Dorsolateral prefrontal cortex (tissue), 120 donors: ENCODE measurements at regions of chr5 and their contacts with region 1.

Region 1: DNA sequence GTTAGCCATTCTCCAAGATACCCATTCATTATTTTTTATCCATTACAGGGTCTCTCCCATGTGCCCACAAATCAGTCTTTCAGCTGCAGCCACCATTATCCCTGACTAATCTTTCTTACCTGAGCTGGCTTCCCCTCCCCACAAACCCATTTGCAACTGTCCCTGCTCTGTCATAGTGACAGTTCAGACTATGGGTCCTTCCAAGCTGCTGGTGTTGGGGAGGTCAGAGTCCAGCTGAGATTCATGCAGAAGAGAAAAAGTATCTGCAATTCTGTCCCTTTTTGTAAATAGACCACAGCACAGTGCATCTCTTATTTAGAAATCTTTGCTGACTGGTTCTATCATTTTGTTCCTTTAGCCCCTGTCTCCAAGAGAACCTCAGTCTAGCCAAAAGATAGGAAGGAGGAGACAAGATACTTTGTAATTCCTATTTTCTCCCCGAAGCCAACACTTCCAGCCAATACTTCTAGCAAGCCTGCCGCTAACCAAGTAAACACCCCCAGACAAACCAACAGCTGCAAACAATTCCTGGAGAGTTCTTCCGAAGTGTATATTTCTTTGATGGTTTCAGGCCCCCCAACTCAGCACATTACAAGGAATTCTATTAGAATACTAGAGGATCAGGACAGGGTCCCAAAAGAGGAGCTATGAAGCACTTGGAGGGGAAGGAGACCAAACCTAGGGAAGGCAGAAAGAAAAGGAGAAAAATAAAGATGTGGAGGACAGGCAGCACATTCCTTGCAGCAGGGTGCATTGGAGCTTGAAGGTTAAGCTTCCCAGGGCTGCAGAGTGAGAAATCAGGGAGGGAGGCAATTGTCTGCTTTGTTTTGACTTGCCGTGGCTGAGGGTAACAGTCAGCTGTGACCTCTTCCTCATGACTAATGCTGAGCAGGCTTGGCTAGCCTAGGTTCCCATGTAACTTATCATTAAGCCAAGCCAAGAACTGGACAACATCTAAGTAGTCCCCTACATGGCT is 148.5 kb downstream of the SGCD start:
- DNase-seq: no peak
- H3K4me3 ChIP-seq: peak overlapping the region in 3 of 59 donors; percentile 8 to 22 (median 14)
- H3K27ac ChIP-seq: peak overlapping the region in 42 of 59 donors; percentile 6 to 85 (median 58)
- H3K27me3 ChIP-seq: no peaks in the 10 kb centered on the region
- CTCF ChIP-seq: no peak

Region 2: GRCh38 chr5:156326718-156327259 is 148.7 kb before region 1 on chr5 and contains the start of gene SGCD:
- intact Hi-C with region 1: loop called in 1 of 2 experiments (anchors 10 kb)
- DNase-seq: peak; percentile 3 to 72 (median 61)
- H3K4me3 ChIP-seq: peak within 1 kb of the TSS; percentile 24 to 79 (median 60)
- H3K27ac ChIP-seq: peak within 1 kb of the TSS in 52 of 59 donors; percentile 0 to 81 (median 58)
- H3K27me3 ChIP-seq: no peaks in the 10 kb centered on the region
- CTCF ChIP-seq: peak in 10 of 56 donors; percentile 8 to 23 (median 15)
- total RNA-seq, gene SGCD: 7.4 to 22.4 (median 12.5) TPM

Region 3: DNA sequence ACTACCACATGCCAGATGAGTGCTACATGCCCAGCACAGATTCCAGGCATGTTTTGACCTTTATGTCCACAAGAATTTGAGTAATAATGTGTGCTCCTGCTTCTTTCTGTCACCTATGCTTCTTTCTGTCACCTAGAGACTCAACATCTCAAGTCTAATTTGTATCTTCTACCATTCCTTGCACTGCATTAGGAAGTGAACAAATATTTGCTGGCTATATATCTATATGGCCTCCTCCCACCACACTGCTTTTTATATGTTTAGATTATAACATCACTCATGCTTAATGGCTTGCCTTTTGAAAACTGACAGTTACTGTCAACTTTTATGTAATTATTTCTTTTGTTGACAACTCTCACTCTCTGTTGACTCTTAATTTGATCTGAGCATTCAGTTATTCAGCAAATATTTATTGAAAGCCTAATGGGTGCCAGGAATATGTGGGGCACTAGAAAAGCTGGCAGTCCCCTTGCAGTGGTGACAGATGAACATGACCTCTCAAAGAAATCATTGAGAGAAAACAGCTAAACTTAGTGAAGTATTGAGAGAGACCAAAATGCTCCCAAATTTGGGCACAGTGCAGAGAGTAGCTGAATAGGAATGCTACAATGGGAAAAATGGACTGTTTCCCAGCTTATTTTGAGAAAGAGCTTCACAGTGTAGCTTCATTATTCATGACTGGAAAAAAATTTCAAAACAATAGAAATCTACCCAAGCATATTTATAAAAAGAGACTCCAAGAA is 109.2 kb after region 1 on chr5:
- intact Hi-C with region 1: loop called in 1 of 2 experiments (anchors 10 kb)
- DNase-seq: no peak
- H3K4me3 ChIP-seq: no peak overlapping the region
- H3K27ac ChIP-seq: peak overlapping the region in 41 of 59 donors; percentile 1 to 97 (median 41)
- H3K27me3 ChIP-seq: no peaks in the 10 kb centered on the region
- CTCF ChIP-seq: no peak

Region 4: DNA sequence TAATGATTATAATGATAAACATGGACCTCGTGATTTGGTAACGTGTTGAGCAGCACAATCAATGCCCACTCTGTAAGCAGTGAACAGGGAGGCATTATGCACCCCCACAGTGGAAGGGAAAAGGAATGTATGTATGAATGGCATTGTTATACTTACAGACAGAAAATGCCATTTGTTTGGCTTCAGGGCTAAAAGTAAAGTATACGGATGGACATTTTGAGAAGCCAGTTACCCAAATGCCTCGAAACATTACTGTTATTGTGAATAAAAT is 114.4 kb after region 1 on chr5:
- intact Hi-C with region 1: loop called (anchors 5 to 10 kb)
- DNase-seq: peak in 4 of 10 donors; percentile 27 to 64 (median 50)
- H3K4me3 ChIP-seq: peak overlapping the region in 18 of 59 donors; percentile 1 to 45 (median 13)
- H3K27ac ChIP-seq: peak overlapping the region; percentile 43 to 99 (median 92)
- H3K27me3 ChIP-seq: no peaks in the 10 kb centered on the region
- CTCF ChIP-seq: no peak

Region 5: GRCh38 chr5:157449011-157449723 is 973.7 kb after region 1 on chr5:
- intact Hi-C with region 1: no loop called
- DNase-seq: peak in 4 of 10 donors; percentile 34 to 86 (median 49)
- H3K4me3 ChIP-seq: no peak overlapping the region
- H3K27ac ChIP-seq: peak overlapping the region in 54 of 59 donors; percentile 1 to 97 (median 63)
- H3K27me3 ChIP-seq: no peaks in the 10 kb centered on the region
- CTCF ChIP-seq: no peak